Activated CD4-positive, alpha-beta T cell treated with anti-CD3 and anti-CD28 coated beads, Interleukin-2, amount 10 ng/mL, durations not matched to agents 24 days and 14 days (primary cell): ENCODE measurements at regions of chr9 and their contacts with region 1.

Region 1: DNA sequence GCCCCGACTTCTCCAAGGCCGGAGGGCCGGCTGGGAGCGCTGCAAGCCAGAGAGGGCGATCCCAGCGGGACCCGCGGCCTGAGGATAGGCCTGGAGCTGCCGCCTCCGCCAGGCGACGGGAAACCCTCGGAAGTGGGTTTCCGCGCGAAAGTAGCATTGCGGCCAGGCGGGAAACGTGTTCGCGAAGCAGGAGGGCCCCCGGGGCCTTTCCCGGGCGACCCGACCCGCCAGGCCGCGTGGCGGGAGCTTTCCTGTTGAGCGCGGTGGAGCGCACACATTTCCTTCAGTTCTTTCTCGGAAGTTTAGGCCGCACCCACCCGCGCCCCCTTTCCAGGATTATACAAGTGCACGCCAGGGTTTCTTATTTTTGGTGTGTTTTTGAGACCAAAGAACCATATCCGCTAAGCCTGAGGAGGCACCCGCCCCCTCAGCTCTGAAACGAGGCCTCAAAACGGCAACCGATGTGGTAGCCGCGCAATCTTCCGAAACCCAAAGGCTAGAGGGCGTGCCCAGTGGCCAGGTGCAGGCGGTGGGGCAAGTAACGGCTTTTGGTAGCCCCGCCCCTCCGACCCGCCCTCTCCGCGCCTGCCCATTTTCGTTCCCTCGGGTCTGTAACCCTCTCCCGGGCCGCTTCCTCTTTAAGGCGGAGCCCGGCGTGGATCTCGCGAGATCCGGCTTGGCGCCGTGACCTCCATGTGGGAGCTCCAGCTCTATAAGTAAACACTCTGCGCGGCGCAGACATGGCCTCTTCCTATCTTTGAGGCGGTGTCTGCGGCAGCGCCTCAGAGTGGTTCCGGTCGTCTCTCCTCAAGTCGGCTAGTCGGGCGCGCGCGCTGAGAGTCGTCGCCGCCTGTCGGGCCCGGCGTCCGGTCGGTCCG is at the start of gene UHRF2:
- DNase-seq: peak; percentile 99
- H3K4me3 Mint-ChIP-seq: peak within 1 kb of the TSS; percentile 88
- H3K27ac Mint-ChIP-seq: peak within 1 kb of the TSS; percentile 97
- H3K4me1 Mint-ChIP-seq: peaks cover 27% of the 10 kb centered on the region
- H3K27me3 Mint-ChIP-seq: peaks cover 4% of the 10 kb centered on the region
- total RNA-seq, gene UHRF2: 61.9 and 71.6 TPM in 2 replicates

Region 2: DNA sequence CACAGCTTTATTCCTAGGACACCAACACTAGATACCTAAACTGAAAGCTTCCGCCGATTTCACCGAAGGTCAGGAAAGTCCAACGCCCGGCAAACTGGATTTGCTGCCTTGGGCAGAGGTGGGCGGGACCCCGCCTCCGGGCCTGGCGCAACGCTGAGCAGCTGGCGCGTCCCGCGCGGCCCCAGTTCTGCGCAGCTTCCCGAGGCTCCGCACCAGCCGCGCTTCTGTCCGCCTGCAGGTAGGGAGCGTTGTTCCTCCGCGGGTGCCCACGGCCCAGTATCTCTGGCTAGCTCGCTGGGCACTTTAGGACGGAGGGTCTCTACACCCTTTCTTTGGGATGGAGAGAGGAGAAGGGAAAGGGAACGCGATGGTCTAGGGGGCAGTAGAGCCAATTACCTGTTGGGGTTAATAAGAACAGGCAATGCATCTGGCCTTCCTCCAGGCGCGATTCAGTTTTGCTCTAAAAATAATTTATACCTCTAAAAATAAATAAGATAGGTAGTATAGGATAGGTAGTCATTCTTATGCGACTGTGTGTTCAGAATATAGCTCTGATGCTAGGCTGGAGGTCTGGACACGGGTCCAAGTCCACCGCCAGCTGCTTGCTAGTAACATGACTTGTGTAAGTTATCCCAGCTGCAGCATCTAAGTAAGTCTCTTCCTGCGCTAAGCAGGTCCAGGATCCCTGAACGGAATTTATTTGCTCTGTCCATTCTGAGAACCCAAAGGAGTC is 962.2 kb before region 1 on chr9 and contains the start of gene CD274:
- intact Hi-C with region 1: loop called (anchors 10 kb)
- DNase-seq: peak; percentile 95
- H3K4me3 Mint-ChIP-seq: peak within 1 kb of the TSS; percentile 90
- H3K27ac Mint-ChIP-seq: peak within 1 kb of the TSS; percentile 90
- H3K4me1 Mint-ChIP-seq: peaks cover 56% of the 10 kb centered on the region
- H3K27me3 Mint-ChIP-seq: no peaks in the 10 kb centered on the region
- total RNA-seq, gene CD274: 52.1 and 57.6 TPM in 2 replicates

Region 3: GRCh38 chr9:6353851-6354686 is 58.7 kb before region 1 on chr9:
- intact Hi-C with region 1: loop called (anchors 2 kb)
- DNase-seq: peak; percentile 82
- H3K4me3 Mint-ChIP-seq: no peak overlapping the region
- H3K27ac Mint-ChIP-seq: no peak overlapping the region
- H3K4me1 Mint-ChIP-seq: peaks cover 11% of the 10 kb centered on the region
- H3K27me3 Mint-ChIP-seq: peaks cover 25% of the 10 kb centered on the region

Region 4: DNA sequence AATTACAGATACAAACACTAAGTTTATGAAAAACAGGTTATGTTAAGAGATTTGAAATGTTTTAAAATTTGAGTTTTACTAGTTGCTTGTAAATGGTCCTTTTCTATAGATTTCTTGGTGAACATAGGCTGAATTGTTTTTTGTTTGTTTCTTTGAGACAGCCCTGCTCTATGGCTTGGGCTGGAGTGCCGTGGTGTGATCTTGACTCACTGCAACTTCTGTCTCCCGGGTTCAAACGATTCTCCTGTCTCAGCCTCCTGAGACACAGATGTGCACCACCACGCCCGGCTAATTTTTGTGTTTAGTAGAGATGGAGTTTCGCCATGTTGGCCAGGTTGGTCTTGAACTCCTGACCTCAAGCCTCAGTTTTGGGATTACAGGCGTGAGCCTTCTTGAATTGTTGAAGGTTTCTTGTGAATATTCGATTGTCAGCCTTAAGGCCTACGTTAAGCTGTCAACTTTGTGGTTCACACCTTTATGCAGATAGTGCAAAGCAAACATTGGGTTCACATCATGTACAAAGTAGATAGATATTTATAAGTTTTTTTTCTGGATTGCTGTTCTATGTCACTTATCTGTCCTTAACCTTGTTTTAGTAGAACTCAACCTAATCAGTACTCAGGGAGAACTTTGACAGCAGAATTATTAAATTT is 26.5 kb after region 1 on chr9:
- intact Hi-C with region 1: no loop called
- DNase-seq: no peak
- H3K4me3 Mint-ChIP-seq: no peak overlapping the region
- H3K27ac Mint-ChIP-seq: no peak overlapping the region
- H3K4me1 Mint-ChIP-seq: peaks cover 34% of the 10 kb centered on the region
- H3K27me3 Mint-ChIP-seq: no peaks in the 10 kb centered on the region

Region 5: GRCh38 chr9:6449645-6450044 is 36.9 kb after region 1 on chr9:
- intact Hi-C with region 1: loop called (anchors 5 kb)
- DNase-seq: no peak
- H3K4me3 Mint-ChIP-seq: no peak overlapping the region
- H3K27ac Mint-ChIP-seq: no peak overlapping the region
- H3K4me1 Mint-ChIP-seq: peaks cover 23% of the 10 kb centered on the region
- H3K27me3 Mint-ChIP-seq: no peaks in the 10 kb centered on the region

Region 6: DNA sequence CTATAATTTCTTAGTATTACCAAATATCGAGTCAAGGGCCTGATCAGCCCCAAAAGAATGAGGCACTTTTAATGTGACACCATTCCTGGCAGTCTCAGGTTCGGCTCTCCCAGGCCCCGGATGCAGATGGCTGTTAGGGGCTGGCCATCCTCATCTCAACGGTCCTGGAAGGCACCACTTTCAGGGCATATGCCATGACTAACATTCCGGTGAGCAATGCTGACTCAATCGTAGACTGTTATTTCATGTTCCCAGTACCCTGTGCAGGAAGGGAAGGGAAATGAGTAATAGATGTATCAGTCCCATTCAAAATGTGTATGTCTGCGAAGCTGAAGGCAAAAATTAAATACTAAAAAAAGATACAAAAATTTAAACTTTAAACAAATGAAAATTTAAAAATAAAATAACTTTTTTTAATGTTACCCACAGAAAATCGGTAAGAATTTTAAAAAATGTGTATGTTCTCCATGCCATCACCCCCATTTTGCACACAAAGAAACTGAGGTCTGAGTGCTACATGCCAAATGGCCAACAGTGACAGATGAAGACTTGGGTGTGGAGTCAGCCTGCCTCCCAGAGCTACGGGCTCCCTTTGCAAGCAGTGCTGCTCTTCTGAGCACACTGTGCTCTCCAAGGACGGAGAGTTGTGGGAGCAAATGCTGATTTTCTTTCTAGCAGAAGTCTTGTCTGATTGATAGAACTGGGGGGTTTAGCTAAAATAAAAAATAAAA is 153.8 kb after region 1 on chr9:
- intact Hi-C with region 1: loop called (anchors 1 kb)
- DNase-seq: peak; percentile 81
- H3K4me3 Mint-ChIP-seq: peak overlapping the region; percentile 73
- H3K27ac Mint-ChIP-seq: peak overlapping the region; percentile 83
- H3K4me1 Mint-ChIP-seq: peaks cover 15% of the 10 kb centered on the region
- H3K27me3 Mint-ChIP-seq: peaks cover 6% of the 10 kb centered on the region

Region 7: DNA sequence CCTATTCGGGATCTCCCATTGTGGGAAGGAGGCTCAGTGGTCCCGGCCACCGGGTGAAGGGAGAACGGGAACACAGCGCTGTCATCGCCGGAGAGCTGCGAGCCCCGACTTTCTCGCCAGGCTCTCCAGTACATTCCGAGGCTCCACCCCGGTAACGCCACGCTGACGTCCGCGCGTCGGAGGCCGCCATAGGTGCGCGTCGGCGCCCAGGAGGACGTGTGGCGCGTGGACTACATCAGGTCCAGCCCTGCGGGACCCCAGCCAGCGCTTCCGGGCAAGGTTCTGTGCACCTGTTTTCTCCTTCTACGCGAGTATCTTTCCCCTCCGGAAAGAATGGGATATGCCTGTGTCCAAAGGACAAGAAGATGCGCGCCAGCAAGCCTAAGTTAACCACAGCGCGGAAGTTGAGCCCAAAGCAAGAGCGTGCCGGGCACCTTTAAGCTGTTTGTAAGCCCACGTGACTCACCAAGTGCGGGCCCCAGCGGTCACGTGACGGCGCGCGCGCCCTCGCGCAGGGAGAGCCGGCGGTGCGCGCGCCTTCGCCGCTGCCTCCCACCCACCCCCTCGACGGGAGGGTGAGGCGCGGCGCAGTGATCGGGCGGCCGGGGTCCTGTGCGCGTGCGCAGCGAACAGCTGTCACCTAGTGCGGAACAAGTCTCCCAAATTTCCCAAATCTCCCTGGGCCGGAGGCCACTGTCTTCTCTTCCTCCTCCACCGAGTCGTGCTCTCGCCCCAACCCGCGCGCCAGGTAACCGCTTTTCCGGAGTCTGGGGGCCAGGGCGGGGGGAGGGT is 344.9 kb after region 1 on chr9 and contains the start of gene KDM4C:
- intact Hi-C with region 1: loop called (anchors 1 kb)
- DNase-seq: peak; percentile 98
- H3K4me3 Mint-ChIP-seq: peak within 1 kb of the TSS; percentile 97
- H3K27ac Mint-ChIP-seq: peak within 1 kb of the TSS; percentile 99
- H3K4me1 Mint-ChIP-seq: peaks cover 23% of the 10 kb centered on the region
- H3K27me3 Mint-ChIP-seq: no peaks in the 10 kb centered on the region
- total RNA-seq, gene KDM4C: 36.4 and 39.8 TPM in 2 replicates